ENCODE measurements at regions of chr4 and their contacts with region 1.

Region 1: GRCh38 chr4:77600521-77601451 is 4.8 kb upstream of the CXCL13 start:
- DNase-seq: no peak
- ATAC-seq: no peak
- H3K4me3 ChIP-seq: no peak overlapping the region
- H3K27ac ChIP-seq: no peak overlapping the region
- H3K4me1 ChIP-seq: no peaks in the 10 kb centered on the region
- H3K27me3 ChIP-seq: no peaks in the 10 kb centered on the region
- CTCF ChIP-seq: peak; percentile 43 to 87 (median 76)

Region 2: GRCh38 chr4:77193511-77194102 is 407.2 kb before region 1 on chr4:
- intact Hi-C with region 1: no loop called
- DNase-seq: peak; percentile 31 to 34
- ATAC-seq: peak in 5 of 8 donors; percentile 39 to 80 (median 64)
- H3K4me3 ChIP-seq: peak overlapping the region in 3 of 10 donors; percentile 19 to 51 (median 23)
- H3K27ac ChIP-seq: peak overlapping the region in 1 of 10 donors; percentile 79
- H3K4me1 ChIP-seq: peaks cover 0 to 14% (median 0%) of the 10 kb centered on the region in 9 donors
- H3K27me3 ChIP-seq: peaks cover 0 to 10% (median 0%) of the 10 kb centered on the region in 7 donors
- CTCF ChIP-seq: no peak

Region 3: DNA sequence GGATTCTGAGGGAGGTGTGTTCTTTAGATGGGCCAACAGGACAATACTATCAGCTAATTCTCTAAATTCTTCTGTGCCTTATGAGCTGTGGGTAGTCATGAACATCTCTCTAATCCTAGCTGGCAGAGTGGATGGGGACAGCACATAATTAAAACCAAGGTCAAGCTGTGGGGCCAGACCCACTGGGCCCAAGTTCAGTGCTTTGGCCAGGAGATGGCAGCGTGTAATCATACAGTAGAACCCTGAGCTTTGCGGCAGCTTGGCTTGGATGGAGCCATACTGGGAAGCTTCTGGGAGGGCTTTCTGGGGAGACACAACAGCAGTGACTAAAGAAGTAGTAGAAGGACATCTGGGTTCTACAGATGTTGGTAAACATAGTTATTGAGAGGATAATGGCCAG is 135.5 kb before region 1 on chr4:
- intact Hi-C with region 1: loop called in 8 of 10 experiments (anchors 1 to 10 kb)
- DNase-seq: no peak
- ATAC-seq: peak in 2 of 8 donors; percentile 25 to 59
- H3K4me3 ChIP-seq: no peak overlapping the region
- H3K27ac ChIP-seq: no peak overlapping the region
- H3K4me1 ChIP-seq: no peaks in the 10 kb centered on the region
- H3K27me3 ChIP-seq: no peaks in the 10 kb centered on the region
- CTCF ChIP-seq: peak in 8 of 9 donors; percentile 17 to 56 (median 50)

Region 4: DNA sequence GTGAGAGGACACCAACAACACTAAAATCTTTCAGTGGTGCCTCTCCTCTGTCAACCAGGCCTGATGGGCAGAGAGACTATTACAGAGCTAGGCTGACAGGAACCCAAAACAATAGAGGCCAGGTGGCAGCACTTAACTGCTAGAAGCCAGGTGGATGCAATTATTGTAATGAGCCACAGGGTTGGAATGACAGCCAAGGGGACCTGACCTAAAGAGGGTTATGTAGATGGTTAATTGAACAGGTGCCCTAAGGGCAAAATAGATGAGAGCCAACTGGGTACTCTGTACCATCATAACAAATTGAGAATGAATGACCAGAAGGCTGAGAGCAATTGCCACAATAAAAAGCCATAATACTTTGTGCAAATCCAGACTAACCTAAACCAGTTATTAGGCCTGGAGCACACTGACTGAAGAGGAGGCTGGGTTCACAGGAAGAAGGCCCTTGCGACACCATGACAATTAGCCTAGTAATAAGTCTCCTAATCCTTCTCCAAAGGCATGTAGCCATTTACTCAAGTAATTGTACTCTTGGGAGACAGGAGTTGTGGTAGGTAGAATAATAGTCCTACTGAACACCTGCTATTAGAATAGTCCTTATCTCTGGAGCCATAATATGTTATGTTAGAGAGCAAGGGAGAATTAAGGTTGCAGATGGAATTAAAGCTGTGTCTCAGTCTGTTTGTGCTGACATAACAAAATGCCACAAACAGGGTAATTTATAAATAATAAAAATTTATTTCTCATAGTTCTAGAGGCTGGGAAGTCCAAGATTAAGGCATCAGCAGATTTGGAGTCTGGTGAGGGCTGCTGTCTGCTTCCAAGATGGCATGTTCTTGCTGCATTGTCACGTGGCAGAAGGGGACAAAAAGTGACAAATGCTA is 431.9 kb after region 1 on chr4:
- intact Hi-C with region 1: no loop called
- DNase-seq: no peak
- ATAC-seq: no peak
- H3K4me3 ChIP-seq: no peak overlapping the region
- H3K27ac ChIP-seq: no peak overlapping the region
- H3K4me1 ChIP-seq: no peaks in the 10 kb centered on the region
- H3K27me3 ChIP-seq: peaks cover 0 to 20% (median 0%) of the 10 kb centered on the region in 7 donors
- CTCF ChIP-seq: no peak

Measured in heart right ventricle (tissue), 16 donors.